IMR-90 (cell line): ENCODE measurements at regions of chr19 and their contacts with region 1.

Region 1: DNA sequence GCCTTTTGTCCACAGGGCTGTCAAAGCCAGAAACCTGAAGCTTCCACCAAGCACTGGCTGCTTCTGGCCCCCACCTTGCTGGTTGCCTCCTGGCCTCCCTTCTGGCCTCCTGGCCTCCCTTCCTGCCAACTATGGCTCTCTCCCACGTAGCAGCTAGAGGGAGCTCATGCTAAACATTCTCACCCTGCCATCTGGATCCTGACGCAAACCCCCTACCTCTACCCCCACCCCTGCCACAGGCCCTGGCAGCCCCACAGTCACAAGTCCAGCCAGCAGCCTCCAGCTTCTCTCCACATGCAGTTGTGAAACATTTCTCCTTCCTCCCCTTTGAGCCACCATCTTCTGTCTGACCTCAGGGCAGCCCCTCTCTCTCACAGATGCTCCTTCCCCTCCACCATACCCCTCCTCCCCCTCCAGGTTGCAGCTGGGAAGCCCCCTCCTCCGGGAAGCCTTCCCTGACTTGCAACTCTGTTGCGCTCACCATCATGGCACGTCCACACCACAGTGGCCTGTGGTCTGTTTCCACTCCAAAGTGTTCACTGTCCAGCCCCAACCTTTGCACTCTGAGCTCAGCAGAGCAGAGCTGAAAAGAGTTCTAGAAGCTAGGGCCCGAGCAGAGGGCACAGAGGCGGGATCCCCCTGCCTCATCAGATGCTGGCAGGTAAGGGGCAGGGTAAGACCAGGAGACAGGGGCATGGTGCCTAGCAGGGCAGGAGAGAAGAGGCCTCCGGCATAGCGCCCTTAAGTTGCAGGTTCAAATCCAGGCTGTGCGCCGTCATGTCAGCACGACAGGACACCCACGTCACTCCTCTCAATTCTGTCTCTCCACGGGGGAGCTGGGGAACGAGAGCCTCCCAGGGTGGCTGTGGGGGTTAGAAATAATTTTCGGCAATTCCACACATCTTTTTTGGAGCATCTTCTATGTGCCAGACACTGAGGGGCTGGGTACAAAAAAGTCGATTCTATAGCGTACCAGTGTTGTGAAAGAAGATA is 7.3 kb downstream of the ADGRL1 start:
- DNase-seq: no peak
- ATAC-seq: no peak
- H3K4me3 ChIP-seq: no peak overlapping the region
- H3K27ac ChIP-seq: no peak overlapping the region
- H3K4me1 ChIP-seq: no peaks in the 10 kb centered on the region
- H3K27me3 ChIP-seq: peaks cover 10% of the 10 kb centered on the region
- CTCF ChIP-seq: no peak
- POLR2A ChIP-seq: no peak
- RAD21 ChIP-seq: no peak

Region 2: GRCh38 chr19:14347999-14348889 is 149.6 kb after region 1 on chr19:
- CTCF ChIA-PET with region 1: interaction called, 26 read pairs
- POLR2A ChIA-PET with region 1: no interaction called
- dilution Hi-C with region 1: no loop called
- in situ Hi-C with region 1: loop called (anchors 5 kb)
- intact Hi-C with region 1: loop called (anchors 1 kb)
- DNase-seq: no peak
- ATAC-seq: peak; percentile 98
- H3K4me3 ChIP-seq: no peak overlapping the region
- H3K27ac ChIP-seq: no peak overlapping the region
- H3K4me1 ChIP-seq: no peaks in the 10 kb centered on the region
- H3K27me3 ChIP-seq: peaks cover 41% of the 10 kb centered on the region
- CTCF ChIP-seq: peak; percentile 94
- POLR2A ChIP-seq: no peak
- RAD21 ChIP-seq: peak; percentile 96

Region 3: GRCh38 chr19:14405758-14406644 is 207.3 kb after region 1 on chr19:
- CTCF ChIA-PET with region 1: no interaction called
- POLR2A ChIA-PET with region 1: no interaction called
- dilution Hi-C with region 1: no loop called
- in situ Hi-C with region 1: no loop called
- intact Hi-C with region 1: loop called (anchors 1 kb)
- DNase-seq: peak; percentile 73
- ATAC-seq: peak; percentile 95
- H3K4me3 ChIP-seq: peak overlapping the region; percentile 7; the same call in 1 of the 2 replicates
- H3K27ac ChIP-seq: no peak overlapping the region
- H3K4me1 ChIP-seq: no peaks in the 10 kb centered on the region
- H3K27me3 ChIP-seq: no peaks in the 10 kb centered on the region
- CTCF ChIP-seq: peak; percentile 83
- POLR2A ChIP-seq: no peak
- RAD21 ChIP-seq: peak; percentile 79